Activated CD8-positive, alpha-beta memory T cell treated with anti-CD3 and anti-CD28 coated beads, Interleukin-2, amount 10 ng/mL, durations not matched to agents 7 days and 5 days (primary cell): ENCODE measurements at regions of chr22 and their contacts with region 1.

Region 1: GRCh38 chr22:41543854-41544670 is at the start of gene POLR3H:
- DNase-seq: peak; percentile 98
- ATAC-seq: peak; percentile 98
- H3K4me3 Mint-ChIP-seq: peak within 1 kb of the TSS; percentile 93
- H3K27ac Mint-ChIP-seq: peak within 1 kb of the TSS; percentile 92
- H3K4me1 Mint-ChIP-seq: peaks cover 40% of the 10 kb centered on the region
- H3K27me3 Mint-ChIP-seq: no peaks in the 10 kb centered on the region
- total RNA-seq, gene POLR3H: 32.4 to 43.7 TPM

Region 2: DNA sequence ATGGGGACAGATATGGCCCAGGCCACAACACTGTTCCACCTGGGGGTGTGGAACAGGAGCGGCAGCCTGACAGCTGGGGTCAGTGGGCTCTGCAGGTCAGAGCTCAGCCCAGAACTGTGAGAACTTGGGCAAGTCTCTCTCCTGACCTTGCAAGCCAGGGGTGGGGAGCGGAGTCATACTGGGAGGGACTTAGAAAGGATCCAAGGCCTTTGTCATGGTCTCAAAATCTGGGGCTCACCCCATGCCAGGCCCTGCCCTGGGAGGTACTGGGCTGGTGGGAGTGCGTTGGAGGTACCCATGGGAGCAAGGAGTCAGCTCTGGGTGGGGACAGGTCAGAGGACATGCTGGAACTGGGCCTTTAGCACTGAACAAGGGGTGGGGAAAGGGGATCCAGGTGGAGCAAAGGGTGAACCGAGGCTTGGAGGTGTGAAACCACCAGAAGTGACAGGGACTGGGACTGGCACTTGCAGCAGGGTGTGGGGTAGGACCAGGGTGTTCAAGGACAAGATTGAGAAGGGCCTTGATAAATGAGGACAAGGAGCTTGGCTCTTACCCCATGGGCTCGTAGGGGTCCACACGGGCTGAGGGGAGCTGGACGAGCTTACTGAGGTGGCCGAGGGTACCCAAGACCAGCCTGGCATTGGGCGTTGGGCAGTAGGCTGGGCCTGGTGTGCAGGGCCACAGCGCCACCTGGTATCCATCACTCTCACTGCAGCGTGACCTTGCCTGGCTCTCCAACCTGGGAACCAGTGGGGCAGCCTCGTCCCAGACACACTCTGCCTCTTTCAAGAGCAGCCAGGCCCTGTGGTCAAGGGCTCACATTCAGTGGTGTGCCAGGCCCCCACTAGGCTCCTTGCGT is 52.9 kb after region 1 on chr22:
- CTCF ChIA-PET with region 1: interaction called, 10 read pairs
- DNase-seq: peak; percentile 51
- ATAC-seq: peak; percentile 68
- H3K4me3 Mint-ChIP-seq: no peak overlapping the region
- H3K27ac Mint-ChIP-seq: no peak overlapping the region
- H3K4me1 Mint-ChIP-seq: peaks cover 19% of the 10 kb centered on the region
- H3K27me3 Mint-ChIP-seq: no peaks in the 10 kb centered on the region